Breast epithelium (tissue), 4 donors: ENCODE measurements at regions of chrX and their contacts with region 1.

Region 1: GRCh38 chrX:98452456-98452855 is 1568.7 kb downstream of the RPA4 start:
- DNase-seq: no peak
- H3K4me3 ChIP-seq: no peak overlapping the region
- H3K27ac ChIP-seq: no peak overlapping the region
- H3K4me1 ChIP-seq: no peaks in the 10 kb centered on the region
- H3K27me3 ChIP-seq: peaks cover 0 to 12% of the 10 kb centered on the region in 2 donors
- CTCF ChIP-seq: no peak
- POLR2A ChIP-seq: no peak

Region 2: DNA sequence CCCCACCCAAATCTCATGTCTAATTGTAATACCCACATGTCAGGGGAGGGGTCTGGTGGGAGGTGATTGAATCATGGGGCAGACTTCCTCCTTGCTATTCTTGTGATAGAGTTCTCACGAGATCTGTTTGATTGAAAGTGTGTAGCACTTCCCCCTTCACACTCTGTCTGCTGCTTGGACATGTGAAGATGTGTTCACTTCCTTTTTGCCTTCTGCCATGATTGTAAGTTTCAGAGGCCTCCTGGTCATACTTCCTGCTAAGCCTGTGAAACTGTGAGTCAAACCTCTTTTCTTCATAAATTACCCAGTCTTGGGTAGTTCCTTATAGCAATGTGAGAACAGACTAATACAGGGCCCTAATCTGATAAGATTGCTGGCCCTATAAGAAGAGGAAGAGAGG is 53.9 kb before region 1 on chrX:
- intact Hi-C with region 1: loop called (anchors 2 kb)
- DNase-seq: no peak
- H3K4me3 ChIP-seq: no peak overlapping the region
- H3K27ac ChIP-seq: no peak overlapping the region
- H3K4me1 ChIP-seq: no peaks in the 10 kb centered on the region
- H3K27me3 ChIP-seq: peaks cover 0 to 9% of the 10 kb centered on the region in 2 donors
- CTCF ChIP-seq: no peak
- POLR2A ChIP-seq: no peak

Region 3: GRCh38 chrX:98523026-98523425 is 70.6 kb after region 1 on chrX:
- intact Hi-C with region 1: no loop called
- DNase-seq: no peak
- H3K4me3 ChIP-seq: no peak overlapping the region
- H3K27ac ChIP-seq: no peak overlapping the region
- H3K4me1 ChIP-seq: no peaks in the 10 kb centered on the region
- H3K27me3 ChIP-seq: peaks cover 0 to 10% of the 10 kb centered on the region in 2 donors
- CTCF ChIP-seq: no peak
- POLR2A ChIP-seq: no peak